ENCODE measurements at regions of chr21 and their contacts with region 1.

Region 1: DNA sequence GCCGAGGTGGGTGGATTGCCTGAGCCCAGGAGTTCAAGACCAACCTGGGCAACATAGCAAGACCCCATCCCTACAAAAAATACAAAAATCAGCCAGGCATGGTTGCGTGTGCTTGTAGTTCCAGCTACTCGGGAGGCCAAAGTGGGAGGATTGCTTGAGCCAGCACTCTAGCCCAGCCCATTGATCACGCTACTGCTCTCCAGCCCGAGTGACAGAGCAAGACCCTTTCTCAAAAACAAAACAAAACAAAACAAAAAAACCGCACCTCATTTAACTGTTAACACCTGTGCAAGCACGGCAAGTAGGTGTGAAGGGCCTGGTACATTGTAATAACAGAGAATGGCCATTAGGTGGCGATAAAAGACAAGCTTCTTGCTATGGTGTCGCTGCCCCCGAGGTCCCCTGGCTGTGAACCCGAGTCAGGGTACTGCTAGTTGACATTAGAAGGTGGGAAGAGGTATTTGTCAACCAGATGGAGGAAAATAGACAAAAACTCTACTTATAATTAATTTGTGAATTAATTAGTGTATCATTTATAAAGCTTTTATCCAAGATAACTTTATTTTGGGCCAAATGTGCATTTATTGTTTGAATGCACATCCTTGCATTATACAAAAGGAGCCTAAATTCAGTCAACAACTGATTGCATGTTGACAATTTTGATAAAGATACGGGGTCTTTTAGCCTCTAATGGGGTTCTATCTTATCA is 66.5 kb downstream of the SH3BGR start:
- DNase-seq: peak; percentile 62
- ATAC-seq: peak; percentile 86
- H3K4me3 Mint-ChIP-seq: no peak overlapping the region
- H3K27ac Mint-ChIP-seq: no peak overlapping the region
- H3K4me1 Mint-ChIP-seq: no peaks in the 10 kb centered on the region
- H3K27me3 Mint-ChIP-seq: peaks cover 3% of the 10 kb centered on the region

Region 2: GRCh38 chr21:39715804-39716397 is 197.6 kb after region 1 on chr21:
- CTCF ChIA-PET with region 1: interaction called, 15 read pairs
- POLR2A ChIA-PET with region 1: no interaction called
- DNase-seq: peak; percentile 59
- ATAC-seq: no peak
- H3K4me3 Mint-ChIP-seq: no peak overlapping the region
- H3K27ac Mint-ChIP-seq: no peak overlapping the region
- H3K4me1 Mint-ChIP-seq: no peaks in the 10 kb centered on the region
- H3K27me3 Mint-ChIP-seq: no peaks in the 10 kb centered on the region